Right lobe of liver (tissue), 6 donors: ENCODE measurements at regions of chr10 and their contacts with region 1.

Region 1: GRCh38 chr10:32346134-32346550 is 816 bp downstream of the EPC1 start:
- DNase-seq: peak; percentile 96 to 98 (median 98)
- ATAC-seq: peak; percentile 93 to 98 (median 95)
- H3K4me3 ChIP-seq: peak overlapping the region; percentile 64 to 85 (median 81)
- H3K27ac ChIP-seq: peak overlapping the region; percentile 99 to 100 (median 100)
- H3K4me1 ChIP-seq: peaks cover 0 to 37% (median 15%) of the 10 kb centered on the region in 4 donors
- H3K27me3 ChIP-seq: no peaks in the 10 kb centered on the region
- CTCF ChIP-seq: peak; percentile 98 to 99 (median 98)
- POLR2A ChIP-seq: no peak

Region 2: GRCh38 chr10:32256613-32257437 is 89.3 kb before region 1 on chr10:
- intact Hi-C with region 1: loop called (anchors 5 to 10 kb)
- DNase-seq: peak; percentile 60 to 71 (median 67)
- ATAC-seq: peak; percentile 95 to 98 (median 96)
- H3K4me3 ChIP-seq: no peak overlapping the region
- H3K27ac ChIP-seq: no peak overlapping the region
- H3K4me1 ChIP-seq: peaks cover 0 to 4% (median 0%) of the 10 kb centered on the region in 4 donors
- H3K27me3 ChIP-seq: no peaks in the 10 kb centered on the region
- CTCF ChIP-seq: peak; percentile 79 to 86 (median 83)
- POLR2A ChIP-seq: no peak

Region 3: DNA sequence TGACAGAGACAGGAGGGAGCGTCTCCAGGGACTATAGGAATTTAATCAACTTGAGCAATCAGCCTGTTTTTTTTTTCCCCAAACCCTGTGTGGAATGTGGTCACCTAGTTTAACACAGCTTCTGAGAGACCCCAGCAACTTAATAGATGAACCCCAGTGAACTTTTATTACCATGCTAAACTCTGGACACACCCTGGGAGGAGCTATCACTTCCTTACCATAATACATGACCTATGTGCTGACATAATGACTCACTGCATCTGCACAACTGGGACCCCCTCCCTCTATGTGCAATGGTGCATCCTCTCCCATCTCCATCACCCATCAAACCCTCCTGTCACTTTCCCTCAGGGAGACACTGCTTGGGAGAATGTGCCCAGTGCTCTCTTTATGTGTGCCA is 82.8 kb before region 1 on chr10:
- intact Hi-C with region 1: loop called (anchors 5 to 10 kb)
- DNase-seq: no peak
- ATAC-seq: peak in 2 of 4 donors; percentile 27 to 40
- H3K4me3 ChIP-seq: no peak overlapping the region
- H3K27ac ChIP-seq: no peak overlapping the region
- H3K4me1 ChIP-seq: no peaks in the 10 kb centered on the region
- H3K27me3 ChIP-seq: no peaks in the 10 kb centered on the region
- CTCF ChIP-seq: no peak
- POLR2A ChIP-seq: no peak

Region 4: GRCh38 chr10:32548208-32548607 is 202.1 kb after region 1 on chr10:
- intact Hi-C with region 1: no loop called
- DNase-seq: no peak
- ATAC-seq: no peak
- H3K4me3 ChIP-seq: no peak overlapping the region
- H3K27ac ChIP-seq: no peak overlapping the region
- H3K4me1 ChIP-seq: no peaks in the 10 kb centered on the region
- H3K27me3 ChIP-seq: no peaks in the 10 kb centered on the region
- CTCF ChIP-seq: no peak
- POLR2A ChIP-seq: no peak

Region 5: GRCh38 chr10:32980558-32981468 is 634.7 kb after region 1 on chr10:
- intact Hi-C with region 1: no loop called
- DNase-seq: peak; percentile 93 to 96 (median 94)
- ATAC-seq: peak; percentile 77 to 93 (median 88)
- H3K4me3 ChIP-seq: peak overlapping the region; percentile 30 to 54 (median 52)
- H3K27ac ChIP-seq: peak overlapping the region; percentile 96 to 98 (median 98)
- H3K4me1 ChIP-seq: peaks cover 0 to 50% (median 23%) of the 10 kb centered on the region in 4 donors
- H3K27me3 ChIP-seq: no peaks in the 10 kb centered on the region
- CTCF ChIP-seq: no peak
- POLR2A ChIP-seq: peak; percentile 99